ENCODE measurements at regions of chr1 and their contacts with region 1.

Region 1: GRCh38 chr1:223123011-223123610 is 19.9 kb downstream of the TLR5 start:
- DNase-seq: no peak
- CTCF ChIP-seq: no peak

Region 2: DNA sequence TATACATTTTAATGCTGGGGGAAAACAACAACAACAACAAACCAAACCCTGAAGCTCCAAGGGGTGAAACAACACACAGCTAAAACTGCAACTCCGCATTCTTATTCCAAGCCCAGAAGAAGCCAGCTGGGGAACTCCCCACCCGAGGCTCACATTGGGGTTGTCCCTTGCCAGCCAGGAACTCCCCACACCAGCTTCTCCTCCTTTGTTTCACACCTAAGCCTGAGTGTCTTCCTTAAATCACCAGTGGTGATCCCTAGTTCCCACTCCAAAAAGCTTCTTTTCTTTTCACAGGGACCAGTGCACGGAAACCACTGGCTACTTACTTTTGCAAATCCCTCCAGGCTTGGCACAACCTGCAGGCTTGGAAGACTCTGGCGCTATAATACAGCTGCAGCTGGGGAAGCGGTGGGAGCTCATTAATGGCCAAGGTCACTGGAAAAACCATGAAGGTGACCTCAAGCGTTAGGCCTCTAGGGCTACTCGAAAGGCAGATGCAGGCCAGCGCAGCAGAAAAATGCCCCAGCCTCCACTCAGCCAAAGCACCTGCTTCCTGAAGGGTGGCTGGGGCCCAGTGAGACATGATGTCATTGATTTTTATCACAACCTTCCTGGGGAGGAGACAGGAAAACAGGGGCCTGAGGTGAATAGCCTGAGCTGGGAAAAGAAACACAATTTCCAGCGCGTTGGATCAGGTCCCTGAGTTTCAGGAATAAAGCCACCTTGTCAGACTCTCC is 20.1 kb before region 1 on chr1:
- CTCF ChIA-PET with region 1: interaction called, 22 read pairs
- POLR2A ChIA-PET with region 1: no interaction called
- DNase-seq: no peak
- CTCF ChIP-seq: no peak

Region 3: GRCh38 chr1:223142795-223143536 is 19.9 kb after region 1 on chr1 and contains the start of gene TLR5:
- CTCF ChIA-PET with region 1: interaction called, 107 read pairs
- POLR2A ChIA-PET with region 1: no interaction called
- DNase-seq: peak; percentile 87
- CTCF ChIP-seq: peak; percentile 15

Region 4: DNA sequence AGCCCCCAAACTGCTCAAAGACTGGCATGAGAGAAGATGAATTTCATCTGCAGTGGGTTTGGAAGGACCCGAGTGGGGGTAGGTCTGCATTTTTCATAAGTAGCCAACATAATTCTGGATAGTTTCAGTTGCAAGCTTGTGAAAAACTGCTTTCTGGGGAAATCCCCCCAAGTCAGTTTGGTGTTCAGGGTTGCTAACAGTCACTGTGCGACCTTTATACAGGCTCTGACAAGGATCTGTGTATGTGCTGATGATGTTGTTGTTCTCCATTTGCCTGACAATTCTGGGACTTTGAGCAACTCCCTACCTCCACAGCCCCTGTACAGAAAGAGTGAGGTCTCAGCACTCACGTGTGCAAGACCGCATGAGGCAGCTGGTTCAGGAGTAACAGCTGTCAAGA is 152.9 kb after region 1 on chr1:
- CTCF ChIA-PET with region 1: no interaction called
- POLR2A ChIA-PET with region 1: no interaction called
- DNase-seq: no peak
- CTCF ChIP-seq: no peak